PC-9 (cell line): ENCODE measurements at regions of chr3 and their contacts with region 1.

Region 1: DNA sequence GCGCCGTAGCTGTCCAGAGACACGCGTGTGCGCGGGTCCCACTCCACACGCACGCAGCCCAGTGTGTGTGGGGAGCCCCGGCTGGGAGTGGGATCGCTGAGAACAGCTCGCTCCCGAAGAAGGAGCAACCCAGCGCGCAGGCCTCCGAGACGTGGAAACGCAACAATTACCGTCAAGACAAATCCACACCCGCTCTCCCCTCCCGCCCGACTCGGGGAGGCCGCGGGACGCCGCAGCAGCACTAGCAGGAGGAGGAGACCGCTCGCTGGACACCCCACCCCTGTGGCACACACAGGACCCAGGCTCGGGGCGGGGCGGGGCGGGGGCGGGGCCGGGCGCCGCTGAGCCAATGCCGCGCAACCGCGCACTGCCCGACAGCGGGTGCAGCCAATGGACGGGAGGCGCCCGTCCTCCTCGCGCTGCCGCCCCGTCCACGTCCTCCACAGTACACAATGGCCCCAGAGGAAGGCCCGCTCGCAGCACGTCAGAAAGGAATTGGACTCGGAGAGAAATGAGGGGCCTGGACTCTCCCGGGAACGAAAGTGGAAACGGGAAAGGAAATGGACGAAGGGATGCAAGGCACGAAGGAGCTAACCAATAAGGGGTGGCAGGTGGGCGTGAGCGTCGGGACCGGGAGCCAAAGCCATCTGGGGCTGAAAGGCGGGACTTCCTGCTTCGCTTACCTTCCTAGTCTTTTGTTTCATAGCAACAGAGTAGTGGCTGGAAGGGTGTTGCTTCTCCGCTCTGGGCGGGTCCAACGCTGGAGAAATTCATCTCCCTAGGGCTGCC is at the start of gene CBLB:
- DNase-seq: peak; percentile 95 to 98
- H3K4me3 ChIP-seq: peak within 1 kb of the TSS; percentile 69
- H3K27ac ChIP-seq: peak within 1 kb of the TSS; percentile 64
- H3K4me1 ChIP-seq: peaks cover 36% of the 10 kb centered on the region
- H3K27me3 ChIP-seq: no peaks in the 10 kb centered on the region
- CTCF ChIP-seq: no peak
- total RNA-seq, gene CBLB: 29.8 and 44.0 TPM in 2 replicates

Region 2: GRCh38 chr3:105806361-105806760 is 62.6 kb before region 1 on chr3:
- CTCF ChIA-PET with region 1: no interaction called
- POLR2A ChIA-PET with region 1: no interaction called
- intact Hi-C with region 1: loop called (anchors 2 kb)
- DNase-seq: peak; percentile 23 to 57
- H3K4me3 ChIP-seq: no peak overlapping the region
- H3K27ac ChIP-seq: no peak overlapping the region
- H3K4me1 ChIP-seq: peaks cover 10% of the 10 kb centered on the region; the same call in 1 of the 2 replicates
- H3K27me3 ChIP-seq: no peaks in the 10 kb centered on the region
- CTCF ChIP-seq: no peak

Region 3: GRCh38 chr3:106119614-106120082 is 250.7 kb after region 1 on chr3:
- CTCF ChIA-PET with region 1: no interaction called
- POLR2A ChIA-PET with region 1: interaction called, 11 read pairs
- intact Hi-C with region 1: loop called (anchors 2 kb)
- DNase-seq: no peak
- H3K4me3 ChIP-seq: no peak overlapping the region
- H3K27ac ChIP-seq: no peak overlapping the region
- H3K4me1 ChIP-seq: peaks cover 65% of the 10 kb centered on the region
- H3K27me3 ChIP-seq: no peaks in the 10 kb centered on the region
- CTCF ChIP-seq: no peak

Region 4: GRCh38 chr3:106333911-106334618 is 465.1 kb after region 1 on chr3:
- CTCF ChIA-PET with region 1: no interaction called
- POLR2A ChIA-PET with region 1: no interaction called
- intact Hi-C with region 1: loop called (anchors 5 kb)
- DNase-seq: peak; percentile 30 to 97
- H3K4me3 ChIP-seq: peak overlapping the region; percentile 6; the same call in 1 of the 2 replicates
- H3K27ac ChIP-seq: peak overlapping the region; percentile 64
- H3K4me1 ChIP-seq: peaks cover 25% of the 10 kb centered on the region
- H3K27me3 ChIP-seq: no peaks in the 10 kb centered on the region
- CTCF ChIP-seq: no peak